Activated naive CD8-positive, alpha-beta T cell treated with anti-CD3 and anti-CD28 coated beads, Interleukin-2, amount 10 ng/mL, durations not matched to agents 7 days and 5 days (primary cell): ENCODE measurements at regions of chr11 and their contacts with region 1.

Region 1: GRCh38 chr11:13335319-13335718 is 57.7 kb downstream of the BMAL1 start:
- DNase-seq: peak; percentile 61
- ATAC-seq: peak; percentile 40
- H3K4me3 Mint-ChIP-seq: no peak overlapping the region
- H3K27ac Mint-ChIP-seq: no peak overlapping the region
- H3K4me1 Mint-ChIP-seq: peaks cover 58% of the 10 kb centered on the region
- H3K27me3 Mint-ChIP-seq: no peaks in the 10 kb centered on the region

Region 2: DNA sequence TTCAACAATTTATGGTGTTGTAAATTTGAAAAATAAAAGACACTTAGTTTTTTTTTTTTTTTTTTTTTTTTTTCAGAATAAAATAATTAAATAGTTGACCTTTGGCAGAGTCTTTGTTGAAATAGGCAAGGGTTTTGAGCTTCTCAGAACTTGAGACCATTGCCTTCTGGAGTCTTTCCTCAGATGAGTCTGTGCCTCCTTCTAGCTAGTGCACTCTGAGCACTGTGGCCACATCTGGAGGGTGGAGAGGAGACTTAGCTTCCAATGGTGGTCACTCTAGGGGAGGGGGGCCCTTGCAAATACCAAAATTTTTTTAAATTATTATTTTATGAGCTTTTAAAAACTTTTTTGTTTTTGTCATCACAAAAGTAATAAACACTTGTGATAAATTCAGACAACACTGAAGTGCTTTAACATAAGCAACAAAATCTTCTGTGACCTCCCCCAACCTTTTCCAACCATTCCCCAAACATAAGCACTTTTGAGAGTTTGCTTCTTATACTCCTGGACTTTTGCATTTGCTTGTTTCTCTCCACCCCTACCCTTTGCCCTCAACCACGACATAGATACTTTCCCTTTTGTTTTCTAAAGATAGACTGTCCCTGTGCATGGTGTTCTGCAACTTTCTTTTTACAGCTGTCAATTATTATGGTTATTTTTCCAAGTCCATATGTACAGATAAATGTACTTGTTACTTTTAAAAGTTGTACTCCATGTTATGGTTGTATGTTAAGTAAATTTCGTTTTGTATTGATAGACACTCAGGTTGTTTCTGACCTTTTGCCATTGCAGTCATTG is 16.6 kb before region 1 on chr11:
- POLR2A ChIA-PET with region 1: interaction called, 10 read pairs
- DNase-seq: no peak
- ATAC-seq: peak; percentile 79
- H3K4me3 Mint-ChIP-seq: peak overlapping the region; percentile 76
- H3K27ac Mint-ChIP-seq: peak overlapping the region; percentile 66
- H3K4me1 Mint-ChIP-seq: peaks cover 36% of the 10 kb centered on the region
- H3K27me3 Mint-ChIP-seq: no peaks in the 10 kb centered on the region